Activated naive CD4-positive, alpha-beta T cell treated with anti-CD3 and anti-CD28 coated beads for 36 hours (primary cell): ENCODE measurements at regions of chr15 and their contacts with region 1.

Region 1: GRCh38 chr15:90387537-90388461 is at the start of gene IQGAP1:
- DNase-seq: peak; percentile 99
- H3K4me3 Mint-ChIP-seq: peak within 1 kb of the TSS; percentile 89
- H3K27ac Mint-ChIP-seq: peak within 1 kb of the TSS; percentile 90
- H3K4me1 Mint-ChIP-seq: peaks cover 39% of the 10 kb centered on the region
- H3K27me3 Mint-ChIP-seq: no peaks in the 10 kb centered on the region
- total RNA-seq, gene IQGAP1: 136 to 143 TPM

Region 2: GRCh38 chr15:90315278-90315986 is 72.4 kb before region 1 on chr15:
- CTCF ChIA-PET with region 1: no interaction called
- intact Hi-C with region 1: no loop called
- DNase-seq: no peak
- H3K4me3 Mint-ChIP-seq: no peak overlapping the region
- H3K27ac Mint-ChIP-seq: no peak overlapping the region
- H3K4me1 Mint-ChIP-seq: peaks cover 7% of the 10 kb centered on the region
- H3K27me3 Mint-ChIP-seq: no peaks in the 10 kb centered on the region

Region 3: GRCh38 chr15:90352109-90352893 is 35.5 kb before region 1 on chr15 and contains the start of gene ZNF774:
- CTCF ChIA-PET with region 1: no interaction called
- intact Hi-C with region 1: loop called (anchors 1 kb)
- DNase-seq: peak; percentile 94
- H3K4me3 Mint-ChIP-seq: peak within 1 kb of the TSS; percentile 88
- H3K27ac Mint-ChIP-seq: peak within 1 kb of the TSS; percentile 53
- H3K4me1 Mint-ChIP-seq: peaks cover 2% of the 10 kb centered on the region
- H3K27me3 Mint-ChIP-seq: no peaks in the 10 kb centered on the region
- total RNA-seq, gene ZNF774: 0.84 to 0.95 TPM

Region 4: DNA sequence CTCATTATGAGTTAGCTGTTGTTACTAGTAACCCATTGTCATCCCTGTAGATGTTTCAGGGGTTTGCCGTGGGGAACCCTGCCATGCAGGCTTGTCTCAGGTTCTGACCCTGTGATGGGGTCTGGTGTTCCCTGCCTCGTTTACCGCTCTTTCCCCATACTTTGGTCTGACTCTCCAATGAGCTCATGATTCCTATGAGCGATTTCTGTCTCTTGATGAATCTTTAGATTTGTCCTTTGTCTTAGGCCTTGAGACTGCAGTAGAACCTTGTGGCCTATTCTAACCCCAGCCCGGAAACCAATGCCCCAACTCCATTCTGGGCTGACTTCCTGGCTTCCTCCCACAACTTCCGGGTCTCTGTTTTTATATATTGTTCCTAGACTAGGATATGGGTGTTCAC is 11.0 kb before region 1 on chr15:
- CTCF ChIA-PET with region 1: interaction called, 3 read pairs
- intact Hi-C with region 1: loop called (anchors 1 kb)
- DNase-seq: peak; percentile 63
- H3K4me3 Mint-ChIP-seq: peak overlapping the region; percentile 41
- H3K27ac Mint-ChIP-seq: peak overlapping the region; percentile 92
- H3K4me1 Mint-ChIP-seq: peaks cover 36% of the 10 kb centered on the region
- H3K27me3 Mint-ChIP-seq: no peaks in the 10 kb centered on the region

Region 5: GRCh38 chr15:90419738-90420406 is 32.1 kb after region 1 on chr15:
- CTCF ChIA-PET with region 1: interaction called, 3 read pairs
- intact Hi-C with region 1: loop called (anchors 1 kb)
- DNase-seq: peak; percentile 73
- H3K4me3 Mint-ChIP-seq: peak overlapping the region; percentile 33
- H3K27ac Mint-ChIP-seq: peak overlapping the region; percentile 87
- H3K4me1 Mint-ChIP-seq: peaks cover 77% of the 10 kb centered on the region
- H3K27me3 Mint-ChIP-seq: no peaks in the 10 kb centered on the region